ENCODE measurements at regions of chr15 and their contacts with region 1.

Region 1: GRCh38 chr15:83248151-83249029 is 36.1 kb downstream of the BNC1 start:
- DNase-seq: peak; percentile 72
- H3K4me3 Mint-ChIP-seq: no peak overlapping the region
- H3K27ac Mint-ChIP-seq: no peak overlapping the region
- H3K4me1 Mint-ChIP-seq: peaks cover 26% of the 10 kb centered on the region
- H3K27me3 Mint-ChIP-seq: no peaks in the 10 kb centered on the region
- CTCF ChIP-seq: peak; percentile 91

Region 2: DNA sequence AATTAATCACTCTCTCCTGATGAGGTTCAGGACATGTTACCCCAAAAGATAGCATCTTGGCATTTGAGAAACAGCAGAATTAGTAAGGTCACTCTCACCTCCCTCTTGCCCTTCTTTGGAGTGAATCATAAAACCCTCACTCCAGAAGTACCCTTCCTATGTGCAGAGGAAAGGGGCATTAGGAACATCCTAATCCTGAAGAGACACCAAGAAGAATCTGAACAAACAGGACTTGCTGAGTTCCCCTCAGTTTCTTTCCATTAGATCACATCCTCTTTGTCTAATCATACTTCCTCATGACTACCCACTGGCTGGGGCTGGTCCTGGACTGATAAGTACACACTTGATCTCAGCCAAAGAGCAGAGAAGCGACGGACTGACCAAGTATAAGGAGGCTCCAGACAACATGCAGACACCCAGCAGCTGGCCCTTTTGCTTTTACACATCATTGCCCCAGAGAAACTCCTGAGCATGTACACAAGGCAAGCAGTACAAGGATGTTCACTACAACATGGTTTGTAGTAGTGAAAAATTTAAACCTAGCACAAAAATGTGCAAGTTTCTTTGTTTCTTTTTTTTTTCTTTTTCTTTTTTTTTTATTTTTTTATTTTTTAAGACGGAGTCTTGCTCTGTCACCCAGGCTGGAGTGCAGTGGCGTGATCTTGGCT is 155.9 kb before region 1 on chr15:
- CTCF ChIA-PET with region 1: no interaction called
- POLR2A ChIA-PET with region 1: no interaction called
- intact Hi-C with region 1: no loop called
- DNase-seq: no peak
- H3K4me3 Mint-ChIP-seq: no peak overlapping the region
- H3K27ac Mint-ChIP-seq: no peak overlapping the region
- H3K4me1 Mint-ChIP-seq: no peaks in the 10 kb centered on the region
- H3K27me3 Mint-ChIP-seq: peaks cover 14% of the 10 kb centered on the region
- CTCF ChIP-seq: no peak

Region 3: GRCh38 chr15:83278173-83278572 is 29.8 kb after region 1 on chr15:
- CTCF ChIA-PET with region 1: interaction called, 10 read pairs
- POLR2A ChIA-PET with region 1: interaction called, 6 read pairs
- intact Hi-C with region 1: no loop called
- DNase-seq: peak; percentile 70
- H3K4me3 Mint-ChIP-seq: no peak overlapping the region
- H3K27ac Mint-ChIP-seq: peak overlapping the region; percentile 99
- H3K4me1 Mint-ChIP-seq: peaks cover 41% of the 10 kb centered on the region
- H3K27me3 Mint-ChIP-seq: no peaks in the 10 kb centered on the region
- CTCF ChIP-seq: no peak

Region 4: GRCh38 chr15:83372420-83372891 is 124.1 kb after region 1 on chr15:
- CTCF ChIA-PET with region 1: interaction called, 21 read pairs
- POLR2A ChIA-PET with region 1: no interaction called
- intact Hi-C with region 1: no loop called
- DNase-seq: peak; percentile 24
- H3K4me3 Mint-ChIP-seq: no peak overlapping the region
- H3K27ac Mint-ChIP-seq: no peak overlapping the region
- H3K4me1 Mint-ChIP-seq: peaks cover 23% of the 10 kb centered on the region
- H3K27me3 Mint-ChIP-seq: no peaks in the 10 kb centered on the region
- CTCF ChIP-seq: no peak

Region 5: GRCh38 chr15:83413054-83413719 is 164.8 kb after region 1 on chr15:
- CTCF ChIA-PET with region 1: interaction called, 10 read pairs
- POLR2A ChIA-PET with region 1: no interaction called
- intact Hi-C with region 1: no loop called
- DNase-seq: no peak
- H3K4me3 Mint-ChIP-seq: no peak overlapping the region
- H3K27ac Mint-ChIP-seq: no peak overlapping the region
- H3K4me1 Mint-ChIP-seq: no peaks in the 10 kb centered on the region
- H3K27me3 Mint-ChIP-seq: no peaks in the 10 kb centered on the region
- CTCF ChIP-seq: no peak

Region 6: DNA sequence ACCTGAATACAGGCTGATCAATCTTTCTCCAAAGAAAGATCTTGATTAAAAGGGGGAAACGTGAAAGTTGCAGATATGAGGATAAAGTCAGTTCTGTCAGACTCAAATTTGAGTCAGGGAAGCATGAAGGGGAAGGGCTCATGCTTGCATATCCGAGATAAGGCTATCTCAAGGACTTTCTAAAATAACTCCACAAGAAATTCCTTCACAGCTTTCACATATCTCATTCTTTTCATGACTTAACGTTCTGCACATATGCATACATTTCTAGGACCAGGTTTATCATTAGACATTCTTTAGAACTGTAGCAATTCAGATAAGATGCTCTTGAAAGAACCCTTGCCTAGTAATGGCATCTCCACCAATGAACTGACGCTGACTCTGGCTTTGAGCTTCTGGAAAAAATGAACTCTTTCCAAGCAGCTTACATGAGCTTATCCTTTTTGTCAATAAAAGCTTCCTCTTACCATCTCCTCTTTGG is 214.6 kb after region 1 on chr15:
- CTCF ChIA-PET with region 1: no interaction called
- POLR2A ChIA-PET with region 1: no interaction called
- intact Hi-C with region 1: no loop called
- DNase-seq: no peak
- H3K4me3 Mint-ChIP-seq: no peak overlapping the region
- H3K27ac Mint-ChIP-seq: no peak overlapping the region
- H3K4me1 Mint-ChIP-seq: no peaks in the 10 kb centered on the region
- H3K27me3 Mint-ChIP-seq: peaks cover 17% of the 10 kb centered on the region
- CTCF ChIP-seq: no peak

Region 7: GRCh38 chr15:83559310-83559966 is 311.0 kb after region 1 on chr15:
- CTCF ChIA-PET with region 1: interaction called, 82 read pairs
- POLR2A ChIA-PET with region 1: interaction called, 10 read pairs
- intact Hi-C with region 1: loop called (anchors 1 kb)
- DNase-seq: peak; percentile 88
- H3K4me3 Mint-ChIP-seq: no peak overlapping the region
- H3K27ac Mint-ChIP-seq: no peak overlapping the region
- H3K4me1 Mint-ChIP-seq: peaks cover 6% of the 10 kb centered on the region
- H3K27me3 Mint-ChIP-seq: no peaks in the 10 kb centered on the region
- CTCF ChIP-seq: peak; percentile 79

Measured in MCF 10A (cell line).